BJ (cell line): ENCODE measurements at regions of chr18 and their contacts with region 1.

Region 1: GRCh38 chr18:63518178-63519012 is 23.8 kb upstream of the SERPINB12 start:
- DNase-seq: no peak
- H3K4me3 ChIP-seq: no peak overlapping the region
- H3K27me3 ChIP-seq: no peaks in the 10 kb centered on the region
- CTCF ChIP-seq: peak; percentile 54

Region 2: GRCh38 chr18:63348508-63349136 is 169.8 kb before region 1 on chr18:
- CTCF ChIA-PET with region 1: no interaction called
- POLR2A ChIA-PET with region 1: no interaction called
- DNase-seq: no peak
- H3K4me3 ChIP-seq: no peak overlapping the region
- H3K27me3 ChIP-seq: no peaks in the 10 kb centered on the region
- CTCF ChIP-seq: no peak

Region 3: DNA sequence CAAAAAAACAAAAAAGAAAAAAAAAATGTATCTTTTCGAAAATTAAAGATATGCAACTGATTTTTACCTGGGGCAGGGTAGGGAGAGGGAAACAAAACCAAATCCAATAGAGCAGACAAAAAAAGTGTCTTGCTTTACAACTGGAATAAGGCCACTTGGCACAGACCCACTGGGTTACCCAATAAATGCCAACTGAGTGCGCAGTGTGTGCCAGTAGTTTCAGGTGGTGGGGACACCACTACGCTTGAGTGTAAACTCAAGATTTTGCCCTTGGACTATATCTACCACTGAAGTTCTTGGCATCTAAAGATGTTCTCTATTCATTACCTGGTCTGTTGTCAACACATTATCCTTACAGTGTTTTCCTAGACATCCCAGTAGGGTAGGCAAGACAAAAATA is 112.4 kb before region 1 on chr18:
- CTCF ChIA-PET with region 1: no interaction called
- POLR2A ChIA-PET with region 1: no interaction called
- DNase-seq: no peak
- H3K4me3 ChIP-seq: no peak overlapping the region
- H3K27me3 ChIP-seq: no peaks in the 10 kb centered on the region
- CTCF ChIP-seq: no peak

Region 4: GRCh38 chr18:63528863-63529492 is 10.6 kb after region 1 on chr18:
- CTCF ChIA-PET with region 1: interaction called, 16 read pairs
- POLR2A ChIA-PET with region 1: no interaction called
- DNase-seq: no peak
- H3K4me3 ChIP-seq: no peak overlapping the region
- H3K27me3 ChIP-seq: peaks cover 2% of the 10 kb centered on the region; the same call in 1 of the 2 replicates
- CTCF ChIP-seq: no peak

Region 5: DNA sequence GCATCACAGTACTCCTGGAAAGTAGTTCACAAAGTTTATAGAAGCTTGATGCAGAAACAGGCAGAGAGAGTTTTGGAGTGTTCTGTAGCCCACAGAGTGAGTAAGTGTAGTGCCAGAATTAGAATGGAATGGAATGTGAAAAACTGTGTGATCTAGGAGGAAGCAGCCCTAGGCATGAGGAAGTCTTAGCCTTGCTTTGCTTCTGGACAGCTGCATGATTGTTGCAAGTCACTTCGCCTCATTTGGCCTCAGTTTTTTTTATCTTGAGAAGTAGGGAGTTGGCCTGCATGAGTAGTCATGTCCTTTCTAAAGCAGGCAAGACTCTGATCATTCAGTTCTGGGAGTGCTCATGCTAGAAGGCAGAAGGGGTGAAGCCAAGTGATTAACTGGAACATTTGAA is 34.7 kb after region 1 on chr18:
- CTCF ChIA-PET with region 1: interaction called, 23 read pairs
- POLR2A ChIA-PET with region 1: no interaction called
- DNase-seq: peak; percentile 95
- H3K4me3 ChIP-seq: no peak overlapping the region
- H3K27me3 ChIP-seq: no peaks in the 10 kb centered on the region
- CTCF ChIP-seq: no peak

Region 6: DNA sequence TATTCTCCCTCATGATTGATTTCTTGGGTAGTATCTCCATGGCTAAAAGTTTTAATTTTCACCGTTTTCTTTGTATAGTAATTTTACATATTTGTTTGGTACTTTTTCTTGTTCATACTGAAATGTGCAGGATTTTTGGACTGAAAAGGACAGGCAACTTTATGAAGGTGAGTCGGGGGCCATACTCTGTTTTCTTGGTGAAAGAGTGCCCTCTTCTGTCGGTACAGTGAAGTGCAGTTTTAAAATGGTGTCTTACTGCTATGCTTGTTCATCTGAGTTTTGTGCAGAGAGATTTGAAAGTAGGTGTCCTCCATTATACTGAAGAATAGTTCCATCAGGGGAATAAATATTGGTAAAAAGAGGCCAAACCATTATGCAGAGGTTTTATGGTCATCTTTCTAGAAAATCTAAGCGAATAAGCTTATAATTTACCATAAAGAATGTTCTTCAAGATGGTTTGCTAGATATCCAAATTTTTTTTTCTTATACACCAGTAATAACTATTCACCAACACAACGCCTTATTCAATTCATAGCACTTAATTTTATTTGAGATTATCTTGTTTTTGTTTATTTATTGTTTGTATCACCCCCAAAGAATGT is 60.1 kb after region 1 on chr18:
- CTCF ChIA-PET with region 1: interaction called, 328 read pairs
- POLR2A ChIA-PET with region 1: interaction called, 4 read pairs
- DNase-seq: peak; percentile 11
- H3K4me3 ChIP-seq: no peak overlapping the region
- H3K27me3 ChIP-seq: no peaks in the 10 kb centered on the region
- CTCF ChIP-seq: peak; percentile 81

Region 7: GRCh38 chr18:63843008-63843407 is 324.6 kb after region 1 on chr18:
- CTCF ChIA-PET with region 1: interaction called, 99 read pairs
- POLR2A ChIA-PET with region 1: no interaction called
- DNase-seq: no peak
- H3K4me3 ChIP-seq: no peak overlapping the region
- H3K27me3 ChIP-seq: no peaks in the 10 kb centered on the region
- CTCF ChIP-seq: no peak

Region 8: GRCh38 chr18:63936156-63936931 is 417.9 kb after region 1 on chr18:
- CTCF ChIA-PET with region 1: interaction called, 43 read pairs
- POLR2A ChIA-PET with region 1: no interaction called
- DNase-seq: peak; percentile 9
- H3K4me3 ChIP-seq: peak overlapping the region; percentile 85
- H3K27me3 ChIP-seq: peaks cover 2% of the 10 kb centered on the region; the same call in 1 of the 2 replicates
- CTCF ChIP-seq: peak; percentile 74